Heart left ventricle (tissue), 16 donors: ENCODE measurements at regions of chr15 and their contacts with region 1.

Region 1: GRCh38 chr15:76711351-76711827 is 193.8 kb downstream of the SCAPER start:
- DNase-seq: no peak
- ATAC-seq: no peak
- H3K4me3 ChIP-seq: no peak overlapping the region
- H3K27ac ChIP-seq: no peak overlapping the region
- H3K4me1 ChIP-seq: no peaks in the 10 kb centered on the region
- H3K27me3 ChIP-seq: no peaks in the 10 kb centered on the region
- CTCF ChIP-seq: no peak
- POLR2A ChIP-seq: no peak

Region 2: DNA sequence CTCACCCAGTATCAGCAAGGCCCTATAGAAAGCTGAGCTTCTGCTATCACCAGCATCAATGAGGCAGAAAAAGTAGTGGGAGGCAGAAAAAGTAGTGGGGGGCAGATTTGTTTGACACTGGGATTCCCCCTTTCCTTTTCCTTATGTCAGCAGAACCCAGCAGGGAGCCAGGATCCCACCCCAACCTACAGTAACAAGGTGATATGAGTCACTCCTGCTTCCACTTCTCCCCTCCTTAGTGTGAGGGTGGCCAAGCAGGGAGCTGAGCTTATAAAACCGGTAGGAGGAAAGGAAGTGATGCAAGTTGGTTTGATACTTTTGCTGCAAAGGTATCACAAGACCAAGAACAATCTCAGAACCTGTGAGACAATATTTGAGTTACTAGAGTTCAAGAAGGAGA is 65.1 kb after region 1 on chr15:
- intact Hi-C with region 1: loop called in 1 of 10 experiments (anchors 10 kb)
- DNase-seq: no peak
- ATAC-seq: no peak
- H3K4me3 ChIP-seq: no peak overlapping the region
- H3K27ac ChIP-seq: no peak overlapping the region
- H3K4me1 ChIP-seq: no peaks in the 10 kb centered on the region
- H3K27me3 ChIP-seq: no peaks in the 10 kb centered on the region
- CTCF ChIP-seq: no peak
- POLR2A ChIP-seq: no peak

Region 3: DNA sequence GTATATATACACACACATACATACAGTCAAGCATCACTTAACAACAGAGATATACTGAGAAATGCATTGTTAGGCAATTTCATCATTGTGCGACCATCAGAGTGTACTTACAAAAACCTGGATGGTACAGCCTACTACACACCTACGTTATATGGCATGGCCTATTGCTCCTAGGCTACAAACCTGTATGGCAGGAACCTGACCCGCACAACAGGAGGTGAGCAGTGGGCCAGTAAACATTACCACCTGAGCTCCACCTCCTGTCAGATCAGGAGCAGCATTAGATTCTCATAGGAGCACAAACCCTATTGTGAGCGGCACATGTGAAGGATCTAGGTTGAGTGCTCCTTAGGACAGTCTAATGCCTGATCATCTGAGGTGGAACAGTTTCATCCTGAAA is 104.0 kb after region 1 on chr15:
- intact Hi-C with region 1: no loop called
- DNase-seq: no peak
- ATAC-seq: no peak
- H3K4me3 ChIP-seq: no peak overlapping the region
- H3K27ac ChIP-seq: no peak overlapping the region
- H3K4me1 ChIP-seq: no peaks in the 10 kb centered on the region
- H3K27me3 ChIP-seq: no peaks in the 10 kb centered on the region
- CTCF ChIP-seq: no peak
- POLR2A ChIP-seq: no peak